ENCODE measurements at regions of chr2 and their contacts with region 1.

Region 1: GRCh38 chr2:101697124-101698013 is at the start of gene MAP4K4:
- DNase-seq: peak; percentile 84
- ATAC-seq: peak; percentile 84
- H3K4me3 ChIP-seq: peak within 1 kb of the TSS; percentile 82 to 99 (median 97)
- H3K27ac ChIP-seq: peak within 1 kb of the TSS; percentile 74
- H3K4me1 ChIP-seq: peaks cover 48% of the 10 kb centered on the region
- H3K27me3 ChIP-seq: no peaks in the 10 kb centered on the region; a peak in 1 of 5 replicates
- CTCF ChIP-seq: peak; percentile 58
- EP300 ChIP-seq: peak in 1 of 2 experiments; percentile 15; a peak in 1 of 4 replicates
- POLR2A ChIP-seq: peak; percentile 48 to 65; a peak in 3 of 4 replicates
- RAD21 ChIP-seq: peak; percentile 86
- total RNA-seq, gene MAP4K4: 264 and 301 TPM in 2 replicates

Region 2: GRCh38 chr2:101518578-101519492 is 178.5 kb before region 1 on chr2:
- CTCF ChIA-PET with region 1: no interaction called
- POLR2A ChIA-PET with region 1: interaction called, 3 read pairs
- in situ Hi-C with region 1: loop called (anchors 5 kb)
- intact Hi-C with region 1: loop called (anchors 2 kb)
- DNase-seq: peak; percentile 78
- ATAC-seq: peak; percentile 87
- H3K4me3 ChIP-seq: peak overlapping the region; percentile 23 to 51 (median 25); a peak in 5 of 6 replicates
- H3K27ac ChIP-seq: no peak overlapping the region
- H3K4me1 ChIP-seq: peaks cover 51% of the 10 kb centered on the region
- H3K27me3 ChIP-seq: no peaks in the 10 kb centered on the region
- CTCF ChIP-seq: peak; percentile 82
- EP300 ChIP-seq: no peak; a peak in 1 of 4 replicates
- POLR2A ChIP-seq: no peak
- RAD21 ChIP-seq: peak; percentile 49

Region 3: GRCh38 chr2:101613056-101613704 is 84.2 kb before region 1 on chr2:
- CTCF ChIA-PET with region 1: no interaction called
- POLR2A ChIA-PET with region 1: interaction called, 4 read pairs
- in situ Hi-C with region 1: no loop called
- intact Hi-C with region 1: loop called (anchors 5 kb)
- DNase-seq: peak; percentile 29
- ATAC-seq: peak; percentile 15; the same call in 1 of the 3 replicates
- H3K4me3 ChIP-seq: no peak overlapping the region
- H3K27ac ChIP-seq: no peak overlapping the region
- H3K4me1 ChIP-seq: peaks cover 58% of the 10 kb centered on the region
- H3K27me3 ChIP-seq: no peaks in the 10 kb centered on the region
- CTCF ChIP-seq: 0 out of 2 replicates have a peak, but pooled peaks have one; percentile 10
- EP300 ChIP-seq: no peak
- POLR2A ChIP-seq: no peak
- RAD21 ChIP-seq: no peak

Region 4: DNA sequence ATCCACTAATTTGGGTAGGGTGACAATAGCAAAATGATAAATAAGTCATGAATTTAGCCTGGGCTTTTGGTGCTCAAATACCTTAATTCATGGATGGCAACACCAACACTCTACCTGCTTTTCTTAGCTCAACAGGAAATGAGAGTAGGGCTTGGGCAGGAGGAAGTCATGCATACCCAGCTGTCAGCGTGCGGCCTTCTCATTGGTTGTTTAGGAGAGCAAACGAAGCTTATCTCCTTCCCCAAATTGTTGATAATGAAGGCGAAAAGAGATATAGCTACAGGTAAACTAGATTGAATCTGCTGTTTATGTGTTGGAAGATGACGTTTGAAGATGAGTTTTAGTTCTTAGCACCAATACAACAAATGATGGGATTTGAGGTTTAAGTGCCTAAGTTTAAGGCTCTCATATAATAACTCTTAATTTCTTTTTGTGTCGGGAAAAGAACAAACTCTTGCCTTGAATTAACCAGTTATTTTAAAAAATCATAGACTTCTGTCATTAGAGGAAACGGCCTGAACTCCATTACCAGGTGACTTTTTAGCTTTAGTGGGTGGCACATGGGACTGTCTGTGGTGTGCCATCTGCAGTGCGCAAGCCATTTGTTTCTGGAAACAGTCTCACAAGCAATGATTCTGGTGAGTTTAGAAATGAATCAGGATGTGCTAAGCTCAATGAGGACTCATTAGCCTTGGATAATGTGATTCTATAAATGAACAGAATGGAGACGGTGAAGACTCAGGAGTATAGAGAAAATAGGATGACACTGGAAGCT is 19.9 kb after region 1 on chr2:
- CTCF ChIA-PET with region 1: no interaction called
- POLR2A ChIA-PET with region 1: interaction called, 10 read pairs
- in situ Hi-C with region 1: no loop called
- intact Hi-C with region 1: no loop called
- DNase-seq: no peak
- ATAC-seq: no peak
- H3K4me3 ChIP-seq: no peak overlapping the region
- H3K27ac ChIP-seq: no peak overlapping the region
- H3K4me1 ChIP-seq: peaks cover 75% of the 10 kb centered on the region
- H3K27me3 ChIP-seq: no peaks in the 10 kb centered on the region
- CTCF ChIP-seq: no peak
- EP300 ChIP-seq: no peak
- POLR2A ChIP-seq: no peak
- RAD21 ChIP-seq: no peak

Region 5: GRCh38 chr2:101762451-101763171 is 65.2 kb after region 1 on chr2:
- CTCF ChIA-PET with region 1: no interaction called
- POLR2A ChIA-PET with region 1: interaction called, 24 read pairs
- in situ Hi-C with region 1: no loop called
- intact Hi-C with region 1: loop called (anchors 1 kb)
- DNase-seq: no peak
- ATAC-seq: peak; percentile 23
- H3K4me3 ChIP-seq: peak overlapping the region in 1 of 3 experiments; percentile 11; a peak in 1 of 6 replicates
- H3K27ac ChIP-seq: peak overlapping the region; percentile 44
- H3K4me1 ChIP-seq: peaks cover 87% of the 10 kb centered on the region
- H3K27me3 ChIP-seq: no peaks in the 10 kb centered on the region
- CTCF ChIP-seq: no peak
- EP300 ChIP-seq: no peak
- POLR2A ChIP-seq: 0 out of 4 replicates have a peak, but pooled peaks of 1 of the 2 experiments have one; percentile 3
- RAD21 ChIP-seq: no peak

Region 6: GRCh38 chr2:101776172-101777043 is 79.0 kb after region 1 on chr2:
- CTCF ChIA-PET with region 1: no interaction called
- POLR2A ChIA-PET with region 1: no interaction called
- in situ Hi-C with region 1: no loop called
- intact Hi-C with region 1: no loop called
- DNase-seq: peak; percentile 30
- ATAC-seq: peak; percentile 54
- H3K4me3 ChIP-seq: no peak overlapping the region
- H3K27ac ChIP-seq: no peak overlapping the region
- H3K4me1 ChIP-seq: peaks cover 100% of the 10 kb centered on the region
- H3K27me3 ChIP-seq: no peaks in the 10 kb centered on the region
- CTCF ChIP-seq: peak; percentile 20; the same call in 1 of the 2 replicates
- EP300 ChIP-seq: no peak
- POLR2A ChIP-seq: no peak
- RAD21 ChIP-seq: no peak

Region 7: DNA sequence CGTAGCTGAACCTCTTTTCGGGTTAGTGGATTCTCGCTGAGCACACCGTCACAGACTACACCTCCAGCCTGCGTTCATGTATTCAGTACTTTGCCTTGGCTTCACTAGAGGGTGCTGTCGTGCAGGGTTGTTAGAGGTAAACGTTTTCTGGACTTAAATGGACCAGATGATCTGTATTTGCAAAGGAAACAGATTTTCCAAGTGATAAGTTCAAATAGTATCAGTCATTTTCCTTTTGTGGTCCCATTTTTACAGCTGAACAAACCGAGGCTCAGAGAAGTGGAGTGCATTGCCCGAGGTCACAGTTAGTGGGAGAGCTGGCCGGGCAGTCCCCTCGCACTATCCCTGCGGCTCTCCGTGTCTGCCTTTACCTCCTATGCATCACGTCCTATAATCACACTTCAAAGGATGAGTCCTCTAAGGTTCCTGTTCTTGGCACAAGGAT is 126.0 kb after region 1 on chr2:
- CTCF ChIA-PET with region 1: interaction called, 3 read pairs
- POLR2A ChIA-PET with region 1: interaction called, 4 read pairs
- in situ Hi-C with region 1: no loop called
- intact Hi-C with region 1: loop called (anchors 5 kb)
- DNase-seq: peak; percentile 71
- ATAC-seq: peak; percentile 80
- H3K4me3 ChIP-seq: no peak overlapping the region
- H3K27ac ChIP-seq: peak overlapping the region; percentile 31
- H3K4me1 ChIP-seq: peaks cover 70% of the 10 kb centered on the region
- H3K27me3 ChIP-seq: no peaks in the 10 kb centered on the region
- CTCF ChIP-seq: peak; percentile 87
- EP300 ChIP-seq: no peak
- POLR2A ChIP-seq: no peak
- RAD21 ChIP-seq: peak; percentile 47; the same call in 1 of the 2 replicates

Region 8: GRCh38 chr2:101860157-101860556 is 162.8 kb after region 1 on chr2:
- CTCF ChIA-PET with region 1: no interaction called
- POLR2A ChIA-PET with region 1: no interaction called
- in situ Hi-C with region 1: no loop called
- intact Hi-C with region 1: no loop called
- DNase-seq: no peak
- ATAC-seq: peak; percentile 54
- H3K4me3 ChIP-seq: no peak overlapping the region
- H3K27ac ChIP-seq: no peak overlapping the region
- H3K4me1 ChIP-seq: peaks cover 24% of the 10 kb centered on the region
- H3K27me3 ChIP-seq: no peaks in the 10 kb centered on the region
- CTCF ChIP-seq: peak; percentile 33; the same call in 1 of the 2 replicates
- EP300 ChIP-seq: no peak
- POLR2A ChIP-seq: no peak
- RAD21 ChIP-seq: no peak

Measured in HepG2 (cell line).